ENCODE measurements at regions of chr4 and their contacts with region 1.

Region 1: GRCh38 chr4:38509551-38509950 is 154.4 kb upstream of the KLF3 start:
- DNase-seq: peak in 9 of 10 donors; percentile 23 to 84 (median 61)
- ATAC-seq: peak; percentile 93 to 94
- H3K4me3 Mint-ChIP-seq: peak overlapping the region; percentile 74 to 94 (median 84)
- H3K27ac Mint-ChIP-seq: peak overlapping the region; percentile 83 to 96 (median 93)
- H3K4me1 Mint-ChIP-seq: peaks cover 63 to 94% (median 83%) of the 10 kb centered on the region in 4 donors
- H3K27me3 Mint-ChIP-seq: no peaks in the 10 kb centered on the region

Region 2: DNA sequence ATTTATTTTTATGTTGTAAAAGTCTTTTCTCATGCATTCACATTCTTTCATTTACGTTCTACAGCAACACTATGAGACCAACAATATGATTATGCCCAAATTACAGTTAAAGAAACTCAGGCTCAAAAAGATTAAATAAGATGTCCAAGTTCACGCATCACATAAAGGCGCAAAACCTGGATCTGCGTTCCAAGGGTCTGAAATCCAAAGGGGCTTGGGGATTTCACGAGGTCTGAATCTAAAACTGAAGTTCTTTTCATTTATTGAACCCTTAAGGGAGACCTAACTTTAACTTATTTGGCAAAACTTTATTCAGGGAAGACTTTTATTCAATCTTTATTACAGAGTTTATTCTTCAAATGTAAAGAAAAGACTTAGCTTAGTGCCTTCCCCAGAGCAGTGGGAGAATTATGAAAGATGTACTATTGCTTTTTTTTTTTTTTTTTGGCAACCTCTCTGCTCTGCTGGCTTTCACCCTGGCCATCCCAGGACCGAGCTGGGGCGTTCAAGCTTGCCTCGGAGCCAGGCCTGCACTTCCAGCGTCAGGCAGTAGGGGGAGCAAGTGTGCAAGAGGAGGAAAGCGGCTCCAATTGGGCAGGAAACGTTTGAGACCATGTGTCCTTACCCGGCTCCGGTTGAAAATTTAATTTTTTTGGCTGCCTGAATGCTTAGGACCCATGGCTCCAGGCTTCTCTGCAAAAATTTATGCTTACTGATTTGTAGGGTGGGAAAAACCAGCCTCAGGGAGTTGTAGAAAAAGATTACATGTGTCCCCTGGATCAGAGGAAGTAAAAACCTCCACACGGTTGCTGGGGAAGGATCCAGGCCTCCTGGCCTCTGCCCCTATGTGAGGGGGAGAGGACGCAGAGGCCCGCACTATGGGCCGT is 189.9 kb before region 1 on chr4:
- POLR2A ChIA-PET with region 1: interaction called, 27 read pairs
- DNase-seq: peak; percentile 72 to 95 (median 86)
- ATAC-seq: peak; percentile 69 to 76
- H3K4me3 Mint-ChIP-seq: peak overlapping the region; percentile 72 to 92 (median 86)
- H3K27ac Mint-ChIP-seq: peak overlapping the region; percentile 82 to 98 (median 94)
- H3K4me1 Mint-ChIP-seq: peaks cover 29 to 67% (median 54%) of the 10 kb centered on the region in 4 donors
- H3K27me3 Mint-ChIP-seq: no peaks in the 10 kb centered on the region

Region 3: DNA sequence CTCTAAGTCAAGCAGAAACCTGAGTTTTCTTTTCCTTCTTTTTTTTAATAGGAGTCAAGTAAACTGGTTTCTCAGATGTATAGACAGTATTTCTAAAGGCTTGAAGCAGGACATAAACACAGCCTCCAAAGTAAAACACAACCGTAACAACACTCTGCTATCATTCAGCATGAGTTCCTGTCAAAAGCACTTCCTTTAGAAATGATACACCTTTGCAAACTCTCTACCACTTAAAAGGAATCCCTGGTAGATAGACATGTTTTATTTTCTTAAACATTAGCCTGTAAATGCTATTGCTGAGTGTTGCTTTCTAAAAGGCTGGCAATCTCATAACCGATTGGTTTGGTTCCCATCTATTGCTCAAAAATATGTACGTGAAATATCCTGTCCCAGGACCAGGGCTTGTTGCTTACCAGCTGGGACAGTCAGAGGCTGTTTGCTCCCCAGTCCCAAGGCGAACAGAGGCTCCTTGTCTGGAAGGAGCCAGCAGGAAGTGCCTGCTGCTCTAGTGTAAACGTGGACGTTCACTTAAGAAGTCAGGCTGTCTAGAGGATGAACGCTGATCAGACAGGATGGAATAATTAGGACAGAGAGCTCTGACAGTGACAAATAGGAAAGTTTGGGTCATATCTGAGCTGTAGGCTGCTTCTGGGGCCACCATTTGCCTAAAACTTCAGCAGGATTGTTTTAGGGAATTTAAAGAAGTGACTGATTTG is 19.5 kb before region 1 on chr4:
- POLR2A ChIA-PET with region 1: interaction called, 20 read pairs
- DNase-seq: peak in 3 of 10 donors; percentile 35 to 55 (median 43)
- ATAC-seq: peak; percentile 84 to 92
- H3K4me3 Mint-ChIP-seq: peak overlapping the region; percentile 63 to 85 (median 82)
- H3K27ac Mint-ChIP-seq: peak overlapping the region; percentile 90 to 99 (median 95)
- H3K4me1 Mint-ChIP-seq: peaks cover 30 to 42% (median 40%) of the 10 kb centered on the region in 4 donors
- H3K27me3 Mint-ChIP-seq: peaks cover 0 to 2% (median 0%) of the 10 kb centered on the region in 5 donors

Region 4: DNA sequence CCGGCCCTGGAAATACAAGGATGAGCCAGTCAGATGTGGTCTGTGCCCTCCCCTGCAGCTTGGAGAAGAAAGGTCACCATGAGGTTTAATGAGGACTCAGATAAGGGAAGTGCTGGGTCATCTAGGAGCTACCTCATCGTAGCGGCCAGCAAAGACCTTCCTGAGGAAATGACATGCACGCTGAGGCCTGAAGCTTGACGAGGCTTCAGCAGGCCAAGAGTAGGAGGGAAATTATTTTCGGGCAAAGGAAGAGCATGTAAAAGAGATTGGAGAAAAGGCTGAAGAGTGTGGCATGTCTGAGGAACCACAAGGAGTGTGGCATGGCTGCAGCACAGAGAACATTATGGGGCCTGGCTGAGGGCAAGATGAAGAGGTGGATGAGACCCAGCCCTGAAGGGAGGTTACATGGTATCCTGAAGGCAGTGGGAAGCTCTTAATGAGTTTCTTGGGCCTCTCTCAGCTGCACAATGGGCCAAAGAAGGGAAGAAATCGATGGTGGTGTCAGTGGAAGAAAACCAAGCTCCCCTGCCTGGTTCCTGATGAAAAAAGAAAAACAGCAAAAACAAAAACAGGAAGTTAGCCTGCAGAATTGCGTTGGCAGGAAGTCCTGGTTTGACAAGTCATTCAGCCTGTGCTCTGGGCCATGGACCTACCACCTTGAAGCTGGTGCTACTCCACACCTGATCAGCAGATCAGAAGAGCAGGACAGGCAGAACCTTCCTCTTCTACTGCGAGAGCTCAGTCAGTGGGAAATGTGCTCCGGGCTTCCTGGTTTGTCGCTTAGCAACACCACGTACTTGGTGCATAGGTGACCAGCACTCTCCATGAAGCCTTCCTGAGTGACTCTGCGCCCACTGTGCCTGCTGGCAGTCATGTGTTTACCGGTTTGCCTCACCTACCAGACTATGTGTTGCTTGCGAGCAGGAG is 19.9 kb after region 1 on chr4:
- POLR2A ChIA-PET with region 1: interaction called, 13 read pairs
- DNase-seq: peak in 7 of 10 donors; percentile 21 to 65 (median 48)
- ATAC-seq: peak; percentile 91 to 93
- H3K4me3 Mint-ChIP-seq: peak overlapping the region in 9 of 10 donors; percentile 30 to 81 (median 61)
- H3K27ac Mint-ChIP-seq: peak overlapping the region; percentile 79 to 94 (median 88)
- H3K4me1 Mint-ChIP-seq: peaks cover 14 to 37% (median 22%) of the 10 kb centered on the region in 4 donors
- H3K27me3 Mint-ChIP-seq: no peaks in the 10 kb centered on the region